ENCODE measurements at regions of chr10 and their contacts with region 1.

Region 1: GRCh38 chr10:23525406-23525805 is 86.5 kb downstream of the OTUD1 start:
- DNase-seq: no peak
- H3K4me3 ChIP-seq: no peak overlapping the region
- H3K27ac ChIP-seq: no peak overlapping the region
- H3K4me1 ChIP-seq: no peaks in the 10 kb centered on the region
- H3K27me3 ChIP-seq: peaks cover 4% of the 10 kb centered on the region
- CTCF ChIP-seq: peak; percentile 54 to 72 (median 56)

Region 2: DNA sequence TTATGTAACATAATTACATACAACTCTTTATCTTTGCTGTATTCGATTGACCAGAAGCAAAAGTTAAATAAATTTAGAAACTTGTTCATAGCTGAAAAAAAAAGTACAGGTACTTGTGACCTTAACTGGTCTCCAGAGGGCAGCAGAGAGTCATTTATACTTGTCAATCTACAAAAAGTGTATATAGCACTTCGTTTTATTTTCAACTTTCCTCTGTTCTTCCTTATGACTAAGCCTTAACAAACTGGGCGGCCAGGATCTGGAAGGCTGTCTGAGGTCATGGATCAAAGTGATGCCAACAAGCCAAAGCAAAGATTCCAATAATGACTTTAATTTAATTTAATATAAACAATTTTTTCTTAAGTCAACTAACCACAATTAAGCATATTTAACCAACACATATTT is 210.6 kb before region 1 on chr10:
- dilution Hi-C with region 1: loop called (anchors 25 kb)
- DNase-seq: peak; percentile 75
- H3K4me3 ChIP-seq: no peak overlapping the region
- H3K27ac ChIP-seq: no peak overlapping the region
- H3K4me1 ChIP-seq: no peaks in the 10 kb centered on the region
- H3K27me3 ChIP-seq: peaks cover 5% of the 10 kb centered on the region
- CTCF ChIP-seq: peak in 2 of 3 experiments; percentile 39 to 53